Activated T-helper 1 cell treated with anti-CD3 and anti-CD28 coated beads, Interleukin-12 subunit alpha, Interleukin-12 subunit beta, Interleukin-2, Interleukin-4 antibody, amounts not matched to agents 30 ng/mL and 10 ng/mL and 1 ng/mL, durations not matched to agents 14 hours and 24 hours and 36 hours (primary cell): ENCODE measurements at regions of chrX and their contacts with region 1.

Region 1: GRCh38 chrX:14039344-14039743 is 9.7 kb upstream of the GEMIN8 start:
- DNase-seq: peak; percentile 31
- H3K4me3 Mint-ChIP-seq: no peak overlapping the region
- H3K27ac Mint-ChIP-seq: no peak overlapping the region
- H3K4me1 Mint-ChIP-seq: no peaks in the 10 kb centered on the region
- H3K27me3 Mint-ChIP-seq: peaks cover 13% of the 10 kb centered on the region

Region 2: DNA sequence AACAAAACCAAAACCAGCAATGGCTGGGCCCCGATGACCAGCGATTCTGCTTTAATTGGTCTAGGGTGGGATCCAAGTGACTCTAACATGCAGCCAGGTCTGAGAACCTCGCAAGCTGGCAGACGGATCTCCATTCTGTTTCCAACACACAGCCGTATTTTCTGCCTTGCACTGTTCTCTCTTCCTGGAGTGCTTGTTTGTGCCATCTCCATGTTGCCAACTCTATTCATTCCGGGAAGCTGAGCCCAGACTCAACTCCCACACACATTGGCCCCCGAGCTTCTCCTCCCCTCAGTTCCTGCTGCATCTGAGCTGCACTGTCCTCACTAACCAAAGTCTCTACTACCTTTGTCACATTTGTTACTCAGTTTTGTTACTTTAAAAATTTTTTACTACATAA is 45.2 kb before region 1 on chrX:
- intact Hi-C with region 1: no loop called
- DNase-seq: no peak
- H3K4me3 Mint-ChIP-seq: no peak overlapping the region
- H3K27ac Mint-ChIP-seq: no peak overlapping the region
- H3K4me1 Mint-ChIP-seq: no peaks in the 10 kb centered on the region
- H3K27me3 Mint-ChIP-seq: no peaks in the 10 kb centered on the region

Region 3: DNA sequence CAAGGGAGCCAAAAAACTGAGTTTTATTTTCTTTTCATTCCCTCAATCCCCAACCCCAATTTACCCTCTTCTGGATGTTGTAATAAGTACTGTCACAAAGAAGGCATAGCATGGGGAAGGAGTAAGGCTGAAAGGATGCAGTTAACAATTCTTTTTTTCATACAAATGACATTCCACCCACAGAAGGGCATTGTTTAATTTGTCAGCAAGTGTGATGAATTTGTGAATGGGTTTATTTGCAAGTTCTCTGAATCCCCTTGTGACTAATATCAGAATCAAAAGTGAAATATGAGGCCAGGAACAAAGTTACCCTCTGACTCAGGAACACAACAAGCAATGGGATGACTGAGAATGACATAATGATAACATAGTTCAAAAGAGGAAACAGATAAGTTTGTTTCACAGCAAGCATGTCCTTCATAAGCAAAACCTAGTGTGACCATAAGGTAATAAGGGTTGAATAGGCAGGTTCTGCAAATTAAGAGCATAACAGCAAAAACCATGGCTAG is 11.8 kb before region 1 on chrX:
- intact Hi-C with region 1: no loop called
- DNase-seq: no peak
- H3K4me3 Mint-ChIP-seq: peak overlapping the region; percentile 99
- H3K27ac Mint-ChIP-seq: peak overlapping the region; percentile 93
- H3K4me1 Mint-ChIP-seq: peaks cover 33% of the 10 kb centered on the region
- H3K27me3 Mint-ChIP-seq: no peaks in the 10 kb centered on the region

Region 4: GRCh38 chrX:14095702-14096101 is 56.4 kb after region 1 on chrX:
- intact Hi-C with region 1: loop called (anchors 1 kb)
- DNase-seq: peak; percentile 6
- H3K4me3 Mint-ChIP-seq: no peak overlapping the region
- H3K27ac Mint-ChIP-seq: no peak overlapping the region
- H3K4me1 Mint-ChIP-seq: no peaks in the 10 kb centered on the region
- H3K27me3 Mint-ChIP-seq: peaks cover 4% of the 10 kb centered on the region

Region 5: DNA sequence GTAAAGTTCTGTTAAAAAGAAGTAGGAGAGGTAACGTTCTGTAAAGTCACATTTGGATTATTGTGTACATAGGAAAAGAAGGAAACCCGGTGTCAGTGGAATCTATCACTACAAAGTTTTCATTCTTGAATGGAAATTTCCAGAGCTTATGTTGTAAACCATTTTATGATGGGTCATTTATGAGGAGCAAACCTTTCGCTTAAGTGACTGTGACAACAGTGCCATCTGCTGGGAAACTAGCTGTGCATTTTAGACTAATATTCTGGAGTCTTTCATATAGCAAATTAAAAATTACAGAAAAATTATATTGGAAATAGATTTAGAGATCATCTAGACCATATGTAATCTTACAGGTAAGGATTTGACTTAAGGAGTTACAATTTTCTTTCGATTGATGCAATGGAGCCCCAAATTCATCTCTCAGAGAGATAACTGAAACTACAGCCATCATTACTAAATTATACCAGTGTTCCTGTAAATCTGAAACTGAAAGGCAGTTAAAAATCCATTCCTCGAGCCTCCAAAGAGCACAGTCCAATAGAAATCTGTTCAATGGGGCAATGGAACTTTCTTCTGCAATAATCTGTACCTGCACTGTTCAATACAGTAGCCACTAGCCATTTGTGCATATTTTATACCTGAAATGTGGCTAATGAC is 1203.7 kb after region 1 on chrX:
- intact Hi-C with region 1: loop called (anchors 1 kb)
- DNase-seq: no peak
- H3K4me3 Mint-ChIP-seq: no peak overlapping the region
- H3K27ac Mint-ChIP-seq: no peak overlapping the region
- H3K4me1 Mint-ChIP-seq: no peaks in the 10 kb centered on the region
- H3K27me3 Mint-ChIP-seq: no peaks in the 10 kb centered on the region

Region 6: GRCh38 chrX:15471016-15471415 is 1431.7 kb after region 1 on chrX:
- intact Hi-C with region 1: loop called (anchors 2 kb)
- DNase-seq: peak; percentile 22
- H3K4me3 Mint-ChIP-seq: no peak overlapping the region
- H3K27ac Mint-ChIP-seq: no peak overlapping the region
- H3K4me1 Mint-ChIP-seq: peaks cover 6% of the 10 kb centered on the region
- H3K27me3 Mint-ChIP-seq: no peaks in the 10 kb centered on the region